ENCODE measurements at regions of chr3 and their contacts with region 1.

Region 1: GRCh38 chr3:143171141-143171970 is 51.8 kb downstream of the CHST2 start:
- DNase-seq: peak; percentile 77
- ATAC-seq: peak; percentile 85
- H3K4me3 ChIP-seq: no peak overlapping the region
- H3K27ac ChIP-seq: peak overlapping the region; percentile 82
- H3K4me1 ChIP-seq: peaks cover 35% of the 10 kb centered on the region
- H3K27me3 ChIP-seq: no peaks in the 10 kb centered on the region
- CTCF ChIP-seq: peak in 1 of 3 experiments; percentile 5; a peak in 1 of 6 replicates
- EP300 ChIP-seq: no peak
- POLR2A ChIP-seq: no peak
- RAD21 ChIP-seq: peak; percentile 14; the same call in 1 of the 2 replicates

Region 2: GRCh38 chr3:142947799-142948575 is 223.4 kb before region 1 on chr3:
- CTCF ChIA-PET with region 1: no interaction called
- POLR2A ChIA-PET with region 1: no interaction called
- RAD21 ChIA-PET with region 1: no interaction called
- SMC1A ChIA-PET with region 1: no interaction called
- in situ Hi-C with region 1: no loop called
- intact Hi-C with region 1: no loop called
- DNase-seq: no peak
- ATAC-seq: no peak
- H3K4me3 ChIP-seq: no peak overlapping the region
- H3K27ac ChIP-seq: no peak overlapping the region
- H3K4me1 ChIP-seq: no peaks in the 10 kb centered on the region; the same call in none of the 2 replicates
- H3K27me3 ChIP-seq: peaks cover 2 to 3% of the 10 kb centered on the region in 2 experiments; a peak in 3 of 4 replicates
- CTCF ChIP-seq: no peak
- EP300 ChIP-seq: no peak
- POLR2A ChIP-seq: no peak
- RAD21 ChIP-seq: no peak

Region 3: GRCh38 chr3:143011705-143012104 is 159.7 kb before region 1 on chr3:
- CTCF ChIA-PET with region 1: no interaction called
- POLR2A ChIA-PET with region 1: no interaction called
- RAD21 ChIA-PET with region 1: no interaction called
- SMC1A ChIA-PET with region 1: no interaction called
- in situ Hi-C with region 1: no loop called
- intact Hi-C with region 1: no loop called
- DNase-seq: no peak
- ATAC-seq: no peak
- H3K4me3 ChIP-seq: peak overlapping the region; percentile 28; the same call in 1 of the 2 replicates
- H3K27ac ChIP-seq: 0 out of 2 replicates have a peak overlapping the region, but pooled peaks have one; percentile 5
- H3K4me1 ChIP-seq: peaks cover 2% of the 10 kb centered on the region
- H3K27me3 ChIP-seq: no peaks in the 10 kb centered on the region
- CTCF ChIP-seq: no peak
- EP300 ChIP-seq: no peak
- POLR2A ChIP-seq: no peak
- RAD21 ChIP-seq: no peak

Region 4: DNA sequence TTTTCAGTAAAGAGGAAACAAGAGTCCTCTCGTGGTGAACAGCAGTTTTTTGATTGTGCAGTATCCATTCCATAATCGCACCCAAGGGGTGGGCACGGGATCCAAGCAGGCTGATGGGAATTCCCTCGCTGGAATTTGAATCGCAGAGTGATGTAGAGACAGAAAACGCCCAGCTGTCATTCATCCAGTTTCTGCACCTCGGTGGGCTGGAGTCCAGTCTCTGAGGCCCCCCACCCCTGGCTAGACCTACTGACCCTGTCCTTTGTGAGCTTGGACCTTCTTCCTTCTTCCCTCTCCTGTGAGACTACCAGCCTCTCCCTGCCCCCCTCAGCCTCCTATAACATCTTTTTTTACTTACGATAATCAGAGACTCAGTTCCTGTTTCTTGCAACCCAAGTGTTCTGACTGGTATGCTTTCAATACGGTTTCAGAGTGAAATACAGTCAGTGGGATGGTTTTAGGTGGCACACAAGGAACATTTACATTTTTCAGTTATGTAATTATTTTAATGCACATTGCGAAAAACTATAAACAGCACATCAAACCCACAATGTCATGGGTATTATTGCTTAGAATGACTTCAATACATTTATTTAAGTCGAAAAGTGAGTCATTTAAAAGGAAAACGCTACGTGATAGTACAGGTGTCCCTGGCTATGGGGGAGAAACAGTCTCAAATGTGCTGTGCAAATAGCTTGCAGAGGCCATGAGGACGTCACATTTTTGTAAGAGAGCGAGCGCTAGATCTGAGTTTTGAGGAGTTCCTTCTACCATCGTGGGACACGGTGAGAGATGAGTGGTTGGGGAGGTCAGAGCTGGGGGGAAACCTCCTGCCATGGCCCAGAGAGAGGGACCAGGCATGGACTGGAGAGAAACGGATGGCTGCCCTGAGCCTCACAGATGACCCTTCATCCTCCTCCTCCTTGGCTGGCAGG is 89.2 kb before region 1 on chr3:
- CTCF ChIA-PET with region 1: no interaction called
- POLR2A ChIA-PET with region 1: no interaction called
- RAD21 ChIA-PET with region 1: no interaction called
- SMC1A ChIA-PET with region 1: interaction called, 11 read pairs
- in situ Hi-C with region 1: no loop called
- intact Hi-C with region 1: no loop called
- DNase-seq: peak; percentile 94
- ATAC-seq: peak; percentile 81
- H3K4me3 ChIP-seq: peak overlapping the region; percentile 51; the same call in 1 of the 2 replicates
- H3K27ac ChIP-seq: peak overlapping the region; percentile 92
- H3K4me1 ChIP-seq: peaks cover 35% of the 10 kb centered on the region
- H3K27me3 ChIP-seq: no peaks in the 10 kb centered on the region
- CTCF ChIP-seq: no peak
- EP300 ChIP-seq: peak; percentile 91 to 93
- POLR2A ChIP-seq: peak; percentile 23
- RAD21 ChIP-seq: no peak

Region 5: GRCh38 chr3:143124601-143125520 is 46.5 kb before region 1 on chr3:
- CTCF ChIA-PET with region 1: interaction called, 4 read pairs
- POLR2A ChIA-PET with region 1: no interaction called
- RAD21 ChIA-PET with region 1: interaction called, 14 read pairs
- SMC1A ChIA-PET with region 1: interaction called, 41 read pairs
- in situ Hi-C with region 1: no loop called
- intact Hi-C with region 1: loop called (anchors 5 kb)
- DNase-seq: no peak
- ATAC-seq: no peak
- H3K4me3 ChIP-seq: no peak overlapping the region
- H3K27ac ChIP-seq: no peak overlapping the region
- H3K4me1 ChIP-seq: peaks cover 27% of the 10 kb centered on the region
- H3K27me3 ChIP-seq: no peaks in the 10 kb centered on the region
- CTCF ChIP-seq: no peak
- EP300 ChIP-seq: no peak
- POLR2A ChIP-seq: no peak
- RAD21 ChIP-seq: no peak

Region 6: DNA sequence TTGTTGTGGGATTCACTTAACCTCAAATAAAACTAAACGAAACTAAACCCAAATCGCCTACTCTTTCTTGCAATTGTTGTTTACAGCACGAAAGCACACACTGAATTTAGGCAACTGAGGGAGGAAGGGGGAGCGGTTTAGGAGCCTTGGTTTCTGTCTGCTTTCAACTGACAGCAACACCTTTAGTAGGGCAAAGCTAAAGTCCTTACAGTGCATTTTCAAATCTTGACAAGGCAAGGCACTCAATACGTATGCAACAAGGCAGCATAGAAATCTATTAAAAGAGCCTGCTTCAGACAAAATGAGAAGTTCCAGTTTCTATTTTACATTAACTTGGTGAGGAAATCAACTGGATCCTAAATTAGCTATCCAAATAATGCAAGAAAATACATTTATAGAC is 122.8 kb after region 1 on chr3:
- CTCF ChIA-PET with region 1: no interaction called
- POLR2A ChIA-PET with region 1: no interaction called
- RAD21 ChIA-PET with region 1: no interaction called
- SMC1A ChIA-PET with region 1: no interaction called
- in situ Hi-C with region 1: no loop called
- intact Hi-C with region 1: no loop called
- DNase-seq: no peak
- ATAC-seq: peak; percentile 82
- H3K4me3 ChIP-seq: peak overlapping the region; percentile 20; the same call in 1 of the 2 replicates
- H3K27ac ChIP-seq: no peak overlapping the region
- H3K4me1 ChIP-seq: peaks cover 22% of the 10 kb centered on the region
- H3K27me3 ChIP-seq: no peaks in the 10 kb centered on the region
- CTCF ChIP-seq: no peak
- EP300 ChIP-seq: no peak
- POLR2A ChIP-seq: no peak
- RAD21 ChIP-seq: no peak